ENCODE measurements at regions of chr17 and their contacts with region 1.

Region 1: GRCh38 chr17:63102034-63102433 is 136.0 kb downstream of the TANC2 start:
- DNase-seq: no peak
- ATAC-seq: peak; percentile 69
- H3K4me3 Mint-ChIP-seq: no peak overlapping the region
- H3K27ac Mint-ChIP-seq: no peak overlapping the region
- H3K4me1 Mint-ChIP-seq: no peaks in the 10 kb centered on the region
- H3K27me3 Mint-ChIP-seq: no peaks in the 10 kb centered on the region
- CTCF ChIP-seq: no peak

Region 2: DNA sequence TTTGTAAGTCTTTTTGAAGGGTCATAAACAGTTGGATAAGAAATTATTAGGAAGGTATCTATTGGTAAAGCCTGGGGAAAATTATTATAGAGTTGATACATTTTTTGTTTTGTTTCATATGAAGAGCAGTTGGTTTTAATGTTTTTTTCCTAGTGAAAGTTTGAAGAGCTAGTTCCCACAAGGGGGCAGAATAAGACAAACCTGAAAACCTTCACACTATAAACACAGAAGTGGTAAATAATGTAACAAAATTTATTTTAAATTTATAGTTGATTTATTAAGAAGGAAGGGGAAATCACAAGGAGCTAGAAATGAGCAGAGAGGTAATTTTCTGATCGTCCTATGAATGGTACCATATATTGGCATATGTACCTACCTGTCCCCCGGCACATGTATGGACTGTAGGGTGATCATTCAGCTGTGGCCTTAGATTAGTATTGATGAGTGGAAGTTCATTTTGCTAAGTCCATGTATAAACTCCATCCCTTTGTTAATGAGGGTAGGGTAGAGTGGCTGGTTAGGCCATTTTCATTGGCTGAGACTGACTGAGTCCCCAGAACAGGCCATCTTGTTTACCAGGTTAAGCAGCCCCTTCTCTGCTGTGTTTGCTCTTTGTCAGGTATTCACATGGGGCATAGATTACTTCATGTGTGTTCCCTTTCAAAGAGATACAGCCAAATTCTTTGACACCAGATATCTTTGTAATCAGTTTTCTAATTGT is 19.6 kb before region 1 on chr17:
- CTCF ChIA-PET with region 1: interaction called, 10 read pairs
- POLR2A ChIA-PET with region 1: no interaction called
- DNase-seq: no peak
- ATAC-seq: no peak
- H3K4me3 Mint-ChIP-seq: no peak overlapping the region
- H3K27ac Mint-ChIP-seq: no peak overlapping the region
- H3K4me1 Mint-ChIP-seq: peaks cover under 1% of the 10 kb centered on the region; the same call in 1 of the 2 replicates
- H3K27me3 Mint-ChIP-seq: no peaks in the 10 kb centered on the region
- CTCF ChIP-seq: no peak

Region 3: GRCh38 chr17:63116976-63117830 is 15.2 kb after region 1 on chr17:
- CTCF ChIA-PET with region 1: interaction called, 10 read pairs
- POLR2A ChIA-PET with region 1: no interaction called
- DNase-seq: no peak
- ATAC-seq: peak; percentile 65
- H3K4me3 Mint-ChIP-seq: no peak overlapping the region
- H3K27ac Mint-ChIP-seq: no peak overlapping the region
- H3K4me1 Mint-ChIP-seq: no peaks in the 10 kb centered on the region
- H3K27me3 Mint-ChIP-seq: no peaks in the 10 kb centered on the region
- CTCF ChIP-seq: no peak

Measured in WTC11 (cell line).